Activated T-helper 1 cell treated with anti-CD3 and anti-CD28 coated beads, Interleukin-12 subunit alpha, Interleukin-12 subunit beta, Interleukin-2, Interleukin-4 antibody, amounts not matched to agents 30 ng/mL and 10 ng/mL and 1 ng/mL, durations not matched to agents 14 hours and 24 hours and 36 hours (primary cell): ENCODE measurements at regions of chr15 and their contacts with region 1.

Region 1: DNA sequence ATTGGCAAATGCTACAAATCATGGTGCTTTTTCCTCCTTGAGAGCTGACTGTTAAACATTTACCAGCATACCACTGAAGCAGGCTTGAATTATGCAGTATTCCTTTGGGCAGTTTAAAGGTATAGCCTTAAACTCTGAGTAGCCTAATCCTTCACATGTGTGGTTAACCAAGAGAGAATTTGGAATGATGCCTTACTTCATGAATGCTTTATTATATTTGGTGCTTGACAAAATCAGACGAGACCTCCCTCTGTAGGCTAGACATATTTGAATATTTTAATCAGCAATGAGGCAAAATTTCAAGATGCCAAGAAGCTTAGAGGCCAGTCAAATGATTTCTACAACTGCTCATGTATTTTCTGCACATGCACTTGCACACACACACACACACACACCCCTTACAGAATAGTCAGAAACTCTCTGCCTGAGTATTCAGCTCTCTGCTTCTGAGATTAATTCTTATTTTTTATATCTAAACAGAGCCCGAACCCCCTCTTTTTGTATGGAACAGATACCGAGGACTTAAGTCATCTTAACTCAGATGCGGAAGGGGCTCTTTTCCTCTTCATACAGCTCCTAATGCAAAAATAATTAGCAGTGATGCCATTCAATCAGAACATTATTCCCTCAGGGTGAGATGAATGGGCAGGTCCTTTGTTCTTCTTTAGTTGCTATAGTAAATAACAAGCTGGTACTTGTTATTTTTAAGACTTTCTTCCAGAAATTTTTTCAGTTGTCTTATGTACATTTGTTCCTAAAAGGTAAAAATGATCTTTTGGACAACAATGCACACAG is 195.5 kb upstream of the TMC3 start:
- DNase-seq: no peak
- H3K4me3 Mint-ChIP-seq: no peak overlapping the region
- H3K27ac Mint-ChIP-seq: no peak overlapping the region
- H3K4me1 Mint-ChIP-seq: no peaks in the 10 kb centered on the region
- H3K27me3 Mint-ChIP-seq: peaks cover 6% of the 10 kb centered on the region

Region 2: DNA sequence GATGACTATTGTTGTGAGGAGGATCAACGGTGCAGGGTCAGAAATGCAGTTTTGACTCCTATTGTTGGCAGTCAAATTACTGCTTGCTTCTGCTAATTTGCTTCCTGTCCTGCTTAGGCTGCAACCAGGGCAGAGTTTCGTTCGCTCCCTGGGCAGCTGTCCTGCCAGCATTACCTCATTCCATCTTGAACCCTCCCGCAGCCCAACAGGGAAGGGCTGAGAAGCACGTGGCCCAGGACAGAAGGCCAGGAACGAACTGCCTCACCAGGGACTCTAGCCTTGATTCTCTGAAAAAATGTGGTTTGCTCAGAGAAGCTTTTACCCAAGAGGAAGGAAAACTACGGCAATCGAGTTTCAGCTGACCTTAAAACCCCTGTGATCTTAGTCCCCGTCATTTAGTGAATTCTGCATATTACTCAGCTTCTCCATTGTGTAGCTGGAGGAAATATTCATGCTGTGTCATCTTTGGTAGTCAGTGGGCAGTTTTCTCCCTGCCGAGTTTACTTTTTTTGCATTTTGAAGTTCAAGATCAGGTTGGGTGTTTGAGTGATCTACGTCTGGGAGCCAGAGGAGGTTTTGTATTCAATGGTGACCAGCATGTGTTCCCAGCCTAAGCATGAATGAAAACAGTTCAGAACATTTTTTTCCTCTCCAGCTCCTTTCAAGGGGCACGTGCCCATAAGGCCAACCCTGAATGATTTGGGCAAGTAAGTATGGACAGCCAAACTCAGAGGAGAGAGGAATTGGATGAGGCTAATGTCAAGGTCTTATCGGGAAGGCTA is 545.8 kb before region 1 on chr15:
- intact Hi-C with region 1: no loop called
- DNase-seq: peak; percentile 35
- H3K4me3 Mint-ChIP-seq: peak overlapping the region; percentile 51
- H3K27ac Mint-ChIP-seq: peak overlapping the region; percentile 96
- H3K4me1 Mint-ChIP-seq: peaks cover 43% of the 10 kb centered on the region
- H3K27me3 Mint-ChIP-seq: no peaks in the 10 kb centered on the region

Region 3: GRCh38 chr15:81589671-81590070 is 20.2 kb after region 1 on chr15:
- intact Hi-C with region 1: loop called (anchors 2 kb)
- DNase-seq: no peak
- H3K4me3 Mint-ChIP-seq: no peak overlapping the region
- H3K27ac Mint-ChIP-seq: no peak overlapping the region
- H3K4me1 Mint-ChIP-seq: no peaks in the 10 kb centered on the region
- H3K27me3 Mint-ChIP-seq: peaks cover 8% of the 10 kb centered on the region

Region 4: DNA sequence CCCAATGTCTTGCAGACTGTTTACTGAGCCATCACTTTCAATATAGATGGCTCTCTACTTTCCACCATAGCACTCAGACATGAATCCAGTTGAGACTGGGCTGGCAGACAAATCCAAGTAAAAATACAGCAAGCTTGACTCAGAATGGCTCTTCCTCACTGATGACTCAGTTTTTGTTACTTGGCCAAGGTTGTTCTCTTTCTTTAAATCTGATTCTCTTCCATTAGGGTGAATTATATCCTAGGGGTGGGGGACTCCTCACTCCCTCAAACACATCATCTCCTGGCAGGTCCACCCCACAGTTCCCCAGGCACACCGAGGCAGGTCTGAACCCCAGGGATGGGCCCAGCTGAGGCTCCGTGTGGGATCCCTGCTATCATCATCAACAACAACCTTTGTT is 318.4 kb after region 1 on chr15:
- intact Hi-C with region 1: no loop called
- DNase-seq: no peak
- H3K4me3 Mint-ChIP-seq: no peak overlapping the region
- H3K27ac Mint-ChIP-seq: no peak overlapping the region
- H3K4me1 Mint-ChIP-seq: no peaks in the 10 kb centered on the region
- H3K27me3 Mint-ChIP-seq: no peaks in the 10 kb centered on the region